ENCODE measurements at regions of chr19 and their contacts with region 1.

Region 1: GRCh38 chr19:15149737-15150136 is 42.5 kb downstream of the SYDE1 start:
- DNase-seq: no peak
- ATAC-seq: no peak

Region 2: DNA sequence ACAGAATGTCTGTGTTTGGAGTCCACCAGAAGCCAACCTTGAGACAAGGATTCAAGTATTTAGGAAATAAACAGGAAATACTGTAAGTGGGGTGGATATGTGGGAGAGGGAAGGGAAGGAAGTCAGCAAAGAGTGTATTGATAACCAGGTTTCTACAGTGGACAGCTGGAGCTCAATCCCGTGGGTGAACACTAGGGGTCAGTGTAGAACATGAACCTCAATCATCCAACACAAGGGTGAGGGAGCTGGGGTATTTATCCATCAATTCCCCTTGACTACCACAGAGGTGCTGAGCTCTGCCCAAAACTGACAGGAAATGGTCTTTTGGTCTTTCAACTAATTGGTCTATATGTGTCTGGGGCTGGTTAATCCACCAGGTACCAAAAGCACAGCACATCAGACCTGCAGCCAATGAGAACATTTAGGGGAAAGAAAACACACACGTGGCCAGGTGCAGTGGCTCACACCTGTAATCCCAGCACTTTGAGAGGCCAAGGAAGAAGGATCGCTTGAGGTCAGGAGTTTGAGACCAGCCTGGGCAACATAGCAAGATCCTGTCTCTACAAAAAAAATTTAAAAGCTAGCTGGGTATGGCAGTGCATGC is 48.2 kb before region 1 on chr19:
- intact Hi-C with region 1: loop called (anchors 2 kb)
- DNase-seq: no peak
- ATAC-seq: peak; percentile 66

Region 3: DNA sequence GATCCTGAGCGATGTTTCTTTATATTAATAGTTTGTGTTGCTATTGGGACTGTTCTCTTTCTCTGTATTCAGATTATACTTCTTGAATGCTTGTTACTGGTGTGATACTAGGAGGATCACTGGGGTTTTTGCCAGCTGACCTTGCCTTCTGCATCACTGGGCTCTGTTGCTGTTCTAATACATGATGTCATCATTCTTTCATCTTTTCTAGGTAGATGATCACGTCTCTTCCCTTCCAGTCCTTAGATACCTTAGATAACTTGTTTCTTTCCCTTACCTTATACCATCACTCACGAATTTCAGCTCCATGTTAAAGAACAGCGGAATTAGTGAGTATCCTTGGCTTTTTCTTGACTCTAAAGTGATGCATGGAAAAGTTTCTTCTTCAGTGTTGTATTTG is 588.0 kb after region 1 on chr19 and contains the start of gene OR10H3:
- intact Hi-C with region 1: no loop called
- DNase-seq: no peak
- ATAC-seq: no peak
- total RNA-seq, gene OR10H3: not detected

Measured in Right ventricle myocardium superior (tissue), 1 donor.